ENCODE measurements at regions of chr14 and their contacts with region 1.

Region 1: GRCh38 chr14:99818503-99819036 is 25.4 kb downstream of the EML1 start:
- DNase-seq: no peak

Region 2: GRCh38 chr14:99780688-99781385 is 37.7 kb before region 1 on chr14:
- intact Hi-C with region 1: loop called in 1 of 2 experiments (anchors 1 kb)
- DNase-seq: no peak

Region 3: GRCh38 chr14:99995700-99996356 is 177.3 kb after region 1 on chr14:
- intact Hi-C with region 1: no loop called
- DNase-seq: no peak

Region 4: DNA sequence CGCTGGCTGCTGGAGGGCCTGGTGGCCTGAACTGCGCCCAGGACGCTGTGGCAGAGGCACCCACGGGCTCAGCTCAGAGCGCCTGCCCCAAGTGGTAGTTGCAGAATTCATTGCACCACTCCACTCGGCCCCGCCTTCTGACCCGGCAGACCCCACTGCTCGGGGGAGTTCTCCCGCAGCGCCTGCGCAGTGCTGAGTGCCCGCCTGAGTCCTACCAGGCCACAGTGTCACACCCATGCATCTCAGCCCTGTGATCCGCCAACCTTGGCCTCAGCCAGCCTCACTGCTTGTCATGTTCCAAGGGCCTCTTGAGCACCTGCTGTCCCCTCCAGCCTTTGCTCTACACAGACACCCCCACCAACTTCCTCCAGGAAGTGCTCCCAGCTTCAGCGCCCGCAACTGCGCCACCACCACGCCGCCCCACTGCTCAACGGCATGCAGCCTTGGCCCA is 328.6 kb after region 1 on chr14:
- intact Hi-C with region 1: no loop called
- DNase-seq: no peak

Measured in posterior vena cava (tissue), 2 donors.